A673 (cell line): ENCODE measurements at regions of chr11 and their contacts with region 1.

Region 1: GRCh38 chr11:69435161-69435986 is 46.1 kb upstream of the LINC01488 start:
- DNase-seq: no peak
- H3K4me3 ChIP-seq: no peak overlapping the region
- H3K27ac ChIP-seq: no peak overlapping the region
- H3K4me1 ChIP-seq: no peaks in the 10 kb centered on the region
- H3K27me3 ChIP-seq: no peaks in the 10 kb centered on the region
- CTCF ChIP-seq: no peak

Region 2: DNA sequence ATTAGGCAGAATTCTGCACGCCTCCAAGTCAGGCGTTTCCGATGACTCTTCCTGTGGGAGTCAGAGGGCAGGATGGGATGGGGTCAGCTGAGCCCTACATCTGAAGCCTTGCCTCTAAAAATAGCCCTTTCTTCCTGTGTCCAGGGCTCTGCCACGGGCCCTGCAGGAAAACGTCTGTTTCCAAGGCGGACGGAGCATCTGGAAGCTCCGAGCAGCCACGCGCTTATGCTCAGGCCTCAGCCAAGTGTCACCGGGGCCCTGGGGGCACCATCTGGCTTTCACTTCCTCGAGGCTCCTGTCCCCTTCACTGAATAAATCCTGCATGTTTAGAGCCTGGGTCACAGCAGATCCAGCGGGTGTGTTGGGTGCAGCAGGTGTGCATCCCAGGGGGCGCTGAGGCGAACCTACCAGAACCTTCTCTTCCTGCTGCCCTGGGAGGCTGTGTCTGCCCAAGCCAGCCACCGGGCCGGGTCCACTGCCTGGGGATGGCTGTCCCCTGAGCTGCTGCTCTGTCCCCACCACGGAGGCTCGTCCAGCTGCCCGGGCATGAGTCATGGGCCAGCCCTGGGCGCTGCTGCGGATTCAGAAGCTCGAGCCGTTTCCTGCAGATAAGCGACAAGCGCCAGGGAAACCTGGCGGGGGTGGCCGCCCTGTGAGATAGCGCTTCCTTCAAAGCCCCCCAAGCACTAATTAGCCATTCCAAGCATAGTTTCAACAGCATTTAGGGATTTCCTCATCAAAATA is 14.1 kb after region 1 on chr11:
- CTCF ChIA-PET with region 1: no interaction called
- POLR2A ChIA-PET with region 1: no interaction called
- intact Hi-C with region 1: no loop called
- DNase-seq: no peak
- H3K4me3 ChIP-seq: no peak overlapping the region
- H3K27ac ChIP-seq: no peak overlapping the region
- H3K4me1 ChIP-seq: peaks cover 5% of the 10 kb centered on the region
- H3K27me3 ChIP-seq: no peaks in the 10 kb centered on the region
- CTCF ChIP-seq: no peak

Region 3: GRCh38 chr11:69465236-69466000 is 30.0 kb after region 1 on chr11:
- CTCF ChIA-PET with region 1: no interaction called
- POLR2A ChIA-PET with region 1: interaction called, 11 read pairs
- intact Hi-C with region 1: no loop called
- DNase-seq: no peak
- H3K4me3 ChIP-seq: no peak overlapping the region
- H3K27ac ChIP-seq: no peak overlapping the region
- H3K4me1 ChIP-seq: no peaks in the 10 kb centered on the region
- H3K27me3 ChIP-seq: no peaks in the 10 kb centered on the region
- CTCF ChIP-seq: no peak

Region 4: GRCh38 chr11:69554894-69555293 is 119.5 kb after region 1 on chr11:
- CTCF ChIA-PET with region 1: no interaction called
- POLR2A ChIA-PET with region 1: no interaction called
- intact Hi-C with region 1: no loop called
- DNase-seq: no peak
- H3K4me3 ChIP-seq: no peak overlapping the region
- H3K27ac ChIP-seq: no peak overlapping the region
- H3K4me1 ChIP-seq: no peaks in the 10 kb centered on the region
- H3K27me3 ChIP-seq: no peaks in the 10 kb centered on the region
- CTCF ChIP-seq: no peak